CD4-positive, alpha-beta T cell (primary cell): ENCODE measurements at regions of chr16 and their contacts with region 1.

Region 1: GRCh38 chr16:11672833-11673612 is 4.8 kb downstream of the SNN start:
- DNase-seq: peak in 9 of 14 experiments; percentile 23 to 81 (median 47)
- ATAC-seq: peak; percentile 11
- H3K4me3 ChIP-seq: no peak overlapping the region
- H3K4me3 Mint-ChIP-seq: peak overlapping the region; percentile 85
- H3K27ac ChIP-seq: peak overlapping the region; percentile 36 to 58
- H3K27ac Mint-ChIP-seq: peak overlapping the region; percentile 94
- H3K4me1 ChIP-seq: peaks cover 85% of the 10 kb centered on the region
- H3K4me1 Mint-ChIP-seq: peaks cover 83% of the 10 kb centered on the region
- H3K27me3 ChIP-seq: no peaks in the 10 kb centered on the region
- H3K27me3 Mint-ChIP-seq: no peaks in the 10 kb centered on the region
- CTCF ChIP-seq: no peak

Region 2: DNA sequence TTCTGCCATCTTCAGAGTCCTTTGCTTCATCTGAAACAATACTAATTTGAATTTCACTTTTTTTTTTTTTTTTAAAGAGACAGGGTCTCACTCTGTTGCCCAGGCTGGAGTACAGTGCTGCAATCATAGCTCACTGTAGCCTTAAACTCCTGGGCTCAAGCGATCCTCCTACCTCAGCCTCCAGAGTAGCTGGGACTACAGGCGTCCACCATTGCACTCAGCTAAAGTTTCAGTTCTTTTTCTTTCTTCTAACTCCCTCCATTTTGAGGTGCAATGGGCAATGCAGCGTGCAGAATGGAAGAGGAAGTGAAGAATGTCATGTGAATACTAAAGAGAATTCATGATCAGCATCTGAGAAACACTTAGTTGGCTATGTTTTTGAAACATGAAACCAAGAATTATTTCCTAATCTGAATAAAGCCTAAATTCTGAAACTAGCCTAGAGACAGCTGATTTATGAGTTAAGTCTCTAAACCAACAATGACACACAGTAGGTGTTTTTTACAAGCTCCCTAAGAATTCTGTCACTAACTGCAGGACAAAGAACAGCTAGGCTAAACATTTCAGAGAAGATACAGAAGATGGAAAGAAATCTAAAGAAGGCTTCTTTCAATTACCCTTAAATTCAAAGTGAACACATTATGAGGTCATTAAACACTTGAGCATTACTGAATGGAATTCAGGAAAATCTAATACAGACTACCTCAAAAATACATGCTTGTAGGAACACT is 16.2 kb after region 1 on chr16:
- CTCF ChIA-PET with region 1: no interaction called
- POLR2A ChIA-PET with region 1: interaction called, 4 read pairs
- intact Hi-C with region 1: loop called in 1 of 2 experiments (anchors 2 kb)
- DNase-seq: peak in 2 of 14 experiments; percentile 35 to 43
- ATAC-seq: peak; percentile 40
- H3K4me3 ChIP-seq: no peak overlapping the region
- H3K4me3 Mint-ChIP-seq: peak overlapping the region; percentile 51
- H3K27ac ChIP-seq: no peak overlapping the region
- H3K27ac Mint-ChIP-seq: peak overlapping the region; percentile 67
- H3K4me1 ChIP-seq: peaks cover 6% of the 10 kb centered on the region
- H3K4me1 Mint-ChIP-seq: peaks cover 44% of the 10 kb centered on the region
- H3K27me3 ChIP-seq: no peaks in the 10 kb centered on the region
- H3K27me3 Mint-ChIP-seq: no peaks in the 10 kb centered on the region
- CTCF ChIP-seq: no peak